Psoas muscle (tissue), 8 donors: ENCODE measurements at regions of chr14 and their contacts with region 1.

Region 1: GRCh38 chr14:60091550-60092530 is at the start of gene PCNX4:
- DNase-seq: peak; percentile 97 to 99
- ATAC-seq: peak; percentile 89 to 96 (median 94)
- H3K4me3 ChIP-seq: peak within 1 kb of the TSS; percentile 87
- H3K27ac ChIP-seq: peak within 1 kb of the TSS; percentile 97
- H3K4me1 ChIP-seq: peaks cover 29% of the 10 kb centered on the region
- H3K27me3 ChIP-seq: no peaks in the 10 kb centered on the region
- CTCF ChIP-seq: no peak
- total RNA-seq, gene PCNX4: 24.4 to 41.4 (median 38.5) TPM

Region 2: GRCh38 chr14:60002819-60003492 is 88.9 kb before region 1 on chr14:
- intact Hi-C with region 1: loop called in 1 of 2 experiments (anchors 5 kb)
- DNase-seq: peak; percentile 75 to 92
- ATAC-seq: peak; percentile 94 to 98 (median 96)
- H3K4me3 ChIP-seq: peak overlapping the region; percentile 17
- H3K27ac ChIP-seq: peak overlapping the region; percentile 89
- H3K4me1 ChIP-seq: peaks cover 19% of the 10 kb centered on the region
- H3K27me3 ChIP-seq: no peaks in the 10 kb centered on the region
- CTCF ChIP-seq: no peak

Region 3: GRCh38 chr14:60151715-60152114 is 59.9 kb after region 1 on chr14:
- intact Hi-C with region 1: loop called in 1 of 2 experiments (anchors 5 kb)
- DNase-seq: peak; percentile 88 to 94
- ATAC-seq: peak; percentile 94 to 97 (median 95)
- H3K4me3 ChIP-seq: peak overlapping the region; percentile 35
- H3K27ac ChIP-seq: peak overlapping the region; percentile 93
- H3K4me1 ChIP-seq: peaks cover 51% of the 10 kb centered on the region
- H3K27me3 ChIP-seq: no peaks in the 10 kb centered on the region
- CTCF ChIP-seq: no peak

Region 4: DNA sequence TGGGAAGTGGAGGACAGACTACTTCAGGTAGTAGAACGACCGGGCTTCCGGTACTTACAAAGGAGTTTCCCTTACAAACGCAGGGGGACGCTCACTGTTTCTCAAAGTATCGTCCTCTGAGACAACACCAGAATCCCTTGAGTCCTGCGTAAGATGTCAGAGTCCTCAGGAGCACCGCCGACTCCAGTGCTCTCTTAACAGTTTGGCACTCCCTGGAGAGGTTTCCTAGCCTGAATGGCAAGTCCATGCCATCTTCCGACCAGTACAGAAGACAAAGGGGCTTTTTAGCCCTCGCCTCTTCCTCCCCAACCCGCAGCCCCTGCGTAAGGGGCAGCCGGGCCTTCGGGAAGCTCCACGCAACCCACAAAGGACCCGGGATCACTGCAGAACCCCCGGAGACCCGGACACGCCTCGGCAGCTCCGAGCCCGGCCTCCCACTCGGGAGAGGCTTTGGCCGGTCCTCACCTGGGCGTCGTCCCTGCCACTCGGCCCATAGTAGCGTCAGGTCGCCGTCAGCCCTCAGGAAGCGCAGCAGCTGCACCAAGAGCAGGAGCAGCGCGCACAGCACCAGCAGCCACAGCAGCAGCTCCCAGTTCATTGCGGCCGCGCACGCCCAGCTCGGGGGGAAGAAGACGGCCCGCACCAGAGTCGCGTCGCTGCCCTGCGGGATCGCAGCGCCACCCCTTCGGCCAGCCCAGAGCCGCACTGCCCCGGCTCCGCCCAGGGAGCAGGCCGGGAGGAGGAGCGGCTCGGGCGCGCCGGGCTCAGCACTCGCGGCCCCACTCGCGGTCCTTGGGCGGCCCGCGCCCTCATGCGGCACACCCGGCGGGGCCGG is 73.1 kb after region 1 on chr14 and contains the start of gene DHRS7:
- intact Hi-C with region 1: loop called in 1 of 2 experiments (anchors 1 kb)
- DNase-seq: peak; percentile 88 to 94
- ATAC-seq: peak; percentile 83 to 89 (median 84)
- H3K4me3 ChIP-seq: peak within 1 kb of the TSS; percentile 78
- H3K27ac ChIP-seq: peak within 1 kb of the TSS; percentile 93
- H3K4me1 ChIP-seq: peaks cover 23% of the 10 kb centered on the region
- H3K27me3 ChIP-seq: no peaks in the 10 kb centered on the region
- CTCF ChIP-seq: peak; percentile 19
- total RNA-seq, gene DHRS7: 239 to 605 (median 497) TPM

Region 5: DNA sequence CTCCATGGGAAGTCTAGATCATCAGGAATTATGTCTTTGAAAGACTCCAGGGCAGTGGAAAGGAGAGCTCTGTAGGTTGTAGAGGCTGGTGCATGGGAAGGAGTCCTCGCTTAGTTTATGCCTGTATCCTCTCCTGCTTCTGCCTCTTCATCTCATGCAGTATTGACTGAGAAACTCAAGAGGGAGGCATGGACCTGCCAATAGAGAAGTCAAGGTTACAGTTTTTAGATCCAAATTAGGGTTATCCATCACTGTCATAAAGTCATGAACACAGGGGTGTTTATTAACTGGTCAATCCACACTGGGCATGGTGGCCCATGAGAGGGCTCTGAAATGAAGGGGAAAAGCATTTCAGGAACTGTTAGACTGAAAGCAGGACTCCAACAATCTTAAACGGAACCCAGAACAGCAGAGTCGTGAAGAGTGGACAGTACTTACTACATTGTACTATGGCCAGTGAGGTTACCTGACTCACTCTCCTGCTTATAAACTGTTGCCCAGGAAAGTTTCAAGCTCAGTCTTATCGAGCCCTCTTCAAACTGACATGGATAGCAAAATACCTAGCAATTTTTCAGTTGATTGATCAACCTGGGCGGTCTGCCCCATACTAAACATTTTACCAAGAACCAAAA is 103.5 kb after region 1 on chr14:
- intact Hi-C with region 1: no loop called
- DNase-seq: no peak
- ATAC-seq: peak; percentile 75 to 89 (median 84)
- H3K4me3 ChIP-seq: no peak overlapping the region
- H3K27ac ChIP-seq: no peak overlapping the region
- H3K4me1 ChIP-seq: no peaks in the 10 kb centered on the region
- H3K27me3 ChIP-seq: no peaks in the 10 kb centered on the region
- CTCF ChIP-seq: peak; percentile 39

Region 6: DNA sequence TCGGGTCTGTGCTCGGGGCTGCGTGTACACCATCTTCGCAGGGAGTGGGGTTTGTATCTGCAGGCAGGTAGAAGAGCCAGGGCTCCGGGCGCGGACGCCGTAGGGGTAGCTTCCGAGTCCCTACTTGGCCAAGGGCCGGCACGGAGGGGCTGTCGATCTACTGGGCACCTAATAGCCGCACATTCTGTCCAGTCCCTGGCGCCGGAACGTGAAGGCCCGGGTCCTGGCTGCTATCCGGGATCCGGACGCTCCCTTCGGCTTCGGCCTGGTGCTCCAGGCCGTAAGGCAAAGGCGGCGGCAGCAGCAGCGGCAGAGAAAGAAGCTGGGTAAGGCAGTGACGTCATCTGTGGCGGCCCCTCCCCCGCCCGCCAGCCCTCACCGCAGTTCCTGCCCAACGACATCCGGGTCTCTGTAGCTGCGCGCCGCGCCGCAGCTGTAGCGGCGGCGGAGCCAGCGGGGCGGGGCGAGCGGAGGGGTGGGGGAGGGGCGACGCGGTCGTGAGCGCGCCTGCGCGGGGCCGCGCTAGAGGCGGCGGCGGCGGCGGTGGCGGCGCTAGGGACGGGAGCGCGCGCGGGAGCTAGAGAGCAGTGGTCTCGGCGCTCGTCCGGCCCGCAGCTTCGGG is 157.0 kb after region 1 on chr14 and contains the start of gene PPM1A:
- intact Hi-C with region 1: loop called (anchors 1 to 5 kb)
- DNase-seq: peak; percentile 95 to 98
- ATAC-seq: peak; percentile 89 to 93 (median 90)
- H3K4me3 ChIP-seq: peak within 1 kb of the TSS; percentile 93
- H3K27ac ChIP-seq: peak within 1 kb of the TSS; percentile 100
- H3K4me1 ChIP-seq: peaks cover 28% of the 10 kb centered on the region
- H3K27me3 ChIP-seq: no peaks in the 10 kb centered on the region
- CTCF ChIP-seq: no peak
- total RNA-seq, gene PPM1A: 123 to 154 (median 131) TPM